ENCODE measurements at regions of chr13 and their contacts with region 1.

Region 1: GRCh38 chr13:106536244-106537034 is 977 bp upstream of the EFNB2 start:
- DNase-seq: peak; percentile 90
- ATAC-seq: peak; percentile 25
- H3K4me3 ChIP-seq: peak overlapping the region; percentile 45 to 83 (median 70)
- H3K4me3 Mint-ChIP-seq: peak overlapping the region; percentile 95
- H3K27ac ChIP-seq: no peak overlapping the region
- H3K27ac Mint-ChIP-seq: peak overlapping the region; percentile 86
- H3K4me1 ChIP-seq: peaks cover 25 to 28% of the 10 kb centered on the region in 2 donors
- H3K4me1 Mint-ChIP-seq: peaks cover 17% of the 10 kb centered on the region
- H3K27me3 ChIP-seq: peaks cover 0 to 31% (median 25%) of the 10 kb centered on the region in 4 experiments
- H3K27me3 Mint-ChIP-seq: peaks cover 26% of the 10 kb centered on the region
- CTCF ChIP-seq: peak; percentile 96

Region 2: DNA sequence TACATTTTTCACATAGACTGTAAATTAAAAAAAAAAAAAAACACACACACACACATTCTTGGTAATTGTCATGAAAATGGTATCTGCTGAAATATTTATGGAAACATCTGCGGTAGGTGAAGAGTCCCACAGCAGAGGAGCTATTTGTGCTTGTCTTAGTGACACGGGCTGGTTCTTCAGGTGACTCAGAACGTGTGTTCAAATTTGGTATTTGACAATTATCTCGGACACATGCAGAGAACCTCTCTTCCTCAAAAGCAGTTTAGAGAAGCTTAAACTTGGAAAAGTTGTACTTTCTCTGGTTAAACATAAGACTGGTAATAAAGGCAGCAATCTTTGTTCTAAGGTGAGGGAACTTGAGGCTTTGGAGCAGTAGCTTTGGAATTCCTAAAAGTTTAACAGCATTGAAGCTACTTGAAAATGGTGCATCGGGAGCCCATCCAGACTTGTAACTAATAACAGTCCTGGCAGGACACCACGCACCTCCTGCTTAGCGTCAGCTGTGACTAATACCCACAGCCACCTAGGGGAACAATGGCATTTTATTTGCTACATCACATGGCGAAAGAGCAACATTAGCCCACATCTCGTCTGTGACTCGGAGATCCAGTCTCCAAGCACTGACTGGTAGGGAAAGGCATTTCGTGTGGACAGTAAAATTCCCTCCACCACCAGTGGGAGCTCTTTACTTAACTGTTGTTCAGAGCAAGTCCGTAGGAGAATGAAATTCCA is 1965.1 kb before region 1 on chr13:
- CTCF ChIA-PET with region 1: no interaction called
- POLR2A ChIA-PET with region 1: no interaction called
- intact Hi-C with region 1: loop called (anchors 5 kb)
- DNase-seq: no peak
- ATAC-seq: no peak
- H3K4me3 ChIP-seq: no peak overlapping the region
- H3K4me3 Mint-ChIP-seq: no peak overlapping the region
- H3K27ac ChIP-seq: no peak overlapping the region
- H3K27ac Mint-ChIP-seq: no peak overlapping the region
- H3K4me1 ChIP-seq: no peaks in the 10 kb centered on the region
- H3K4me1 Mint-ChIP-seq: no peaks in the 10 kb centered on the region
- H3K27me3 ChIP-seq: no peaks in the 10 kb centered on the region
- H3K27me3 Mint-ChIP-seq: no peaks in the 10 kb centered on the region
- CTCF ChIP-seq: no peak

Region 3: GRCh38 chr13:106083620-106084350 is 452.7 kb before region 1 on chr13:
- CTCF ChIA-PET with region 1: no interaction called
- POLR2A ChIA-PET with region 1: no interaction called
- intact Hi-C with region 1: loop called (anchors 10 kb)
- DNase-seq: no peak
- ATAC-seq: no peak
- H3K4me3 ChIP-seq: no peak overlapping the region
- H3K4me3 Mint-ChIP-seq: no peak overlapping the region
- H3K27ac ChIP-seq: no peak overlapping the region
- H3K27ac Mint-ChIP-seq: no peak overlapping the region
- H3K4me1 ChIP-seq: no peaks in the 10 kb centered on the region
- H3K4me1 Mint-ChIP-seq: no peaks in the 10 kb centered on the region
- H3K27me3 ChIP-seq: no peaks in the 10 kb centered on the region
- H3K27me3 Mint-ChIP-seq: no peaks in the 10 kb centered on the region
- CTCF ChIP-seq: no peak

Region 4: GRCh38 chr13:106548064-106548696 is 11.7 kb after region 1 on chr13:
- CTCF ChIA-PET with region 1: interaction called, 14 read pairs
- POLR2A ChIA-PET with region 1: no interaction called
- intact Hi-C with region 1: no loop called
- DNase-seq: no peak
- ATAC-seq: no peak
- H3K4me3 ChIP-seq: no peak overlapping the region
- H3K4me3 Mint-ChIP-seq: no peak overlapping the region
- H3K27ac ChIP-seq: no peak overlapping the region
- H3K27ac Mint-ChIP-seq: no peak overlapping the region
- H3K4me1 ChIP-seq: no peaks in the 10 kb centered on the region
- H3K4me1 Mint-ChIP-seq: peaks cover 11% of the 10 kb centered on the region
- H3K27me3 ChIP-seq: no peaks in the 10 kb centered on the region
- H3K27me3 Mint-ChIP-seq: no peaks in the 10 kb centered on the region
- CTCF ChIP-seq: no peak

Region 5: DNA sequence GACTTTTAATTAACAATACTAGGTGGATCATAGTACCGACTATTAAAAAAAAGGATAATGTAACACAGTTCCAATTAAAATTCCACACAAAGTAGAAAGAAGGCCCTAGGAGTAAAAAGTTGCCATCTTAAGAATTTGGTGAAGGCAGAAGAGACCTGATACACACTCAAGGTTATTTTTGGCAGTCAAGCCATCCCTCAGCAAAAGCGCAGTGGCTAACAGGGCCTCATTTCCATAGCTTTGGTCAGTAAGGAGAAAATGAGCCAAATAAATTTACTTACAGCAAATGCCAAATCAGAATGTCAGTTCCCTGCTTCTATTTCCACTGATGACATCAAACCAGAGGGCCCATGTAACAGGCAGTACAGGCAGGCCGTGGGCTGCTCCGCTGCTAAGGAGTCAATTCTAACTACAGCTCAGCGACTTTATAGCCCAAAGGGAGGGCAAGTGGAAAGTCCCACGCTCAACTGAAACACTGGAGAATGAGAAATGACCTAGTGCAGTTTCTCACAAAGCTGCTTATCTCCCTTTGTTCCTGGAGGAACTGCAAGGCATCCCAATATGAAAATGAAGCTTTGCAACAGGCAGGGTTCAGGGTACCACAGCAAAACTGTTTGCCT is 25.2 kb after region 1 on chr13:
- CTCF ChIA-PET with region 1: interaction called, 56 read pairs
- POLR2A ChIA-PET with region 1: no interaction called
- intact Hi-C with region 1: no loop called
- DNase-seq: peak; percentile 51
- ATAC-seq: peak; percentile 83
- H3K4me3 ChIP-seq: no peak overlapping the region
- H3K4me3 Mint-ChIP-seq: peak overlapping the region; percentile 64
- H3K27ac ChIP-seq: peak overlapping the region in 1 of 2 donors; percentile 54
- H3K27ac Mint-ChIP-seq: no peak overlapping the region
- H3K4me1 ChIP-seq: peaks cover 43 to 56% of the 10 kb centered on the region in 2 donors
- H3K4me1 Mint-ChIP-seq: peaks cover 69% of the 10 kb centered on the region
- H3K27me3 ChIP-seq: no peaks in the 10 kb centered on the region
- H3K27me3 Mint-ChIP-seq: no peaks in the 10 kb centered on the region
- CTCF ChIP-seq: no peak

Region 6: GRCh38 chr13:106567474-106568298 is 31.2 kb after region 1 on chr13 and contains the start of gene ARGLU1:
- CTCF ChIA-PET with region 1: interaction called, 56 read pairs
- POLR2A ChIA-PET with region 1: interaction called, 5 read pairs
- intact Hi-C with region 1: loop called (anchors 1 kb)
- DNase-seq: peak; percentile 96
- ATAC-seq: peak; percentile 84
- H3K4me3 ChIP-seq: peak within 1 kb of the TSS; percentile 82 to 98 (median 96)
- H3K4me3 Mint-ChIP-seq: peak within 1 kb of the TSS; percentile 90
- H3K27ac ChIP-seq: peak within 1 kb of the TSS; percentile 87 to 97
- H3K27ac Mint-ChIP-seq: peak within 1 kb of the TSS; percentile 95
- H3K4me1 ChIP-seq: peaks cover 51 to 52% of the 10 kb centered on the region in 2 donors
- H3K4me1 Mint-ChIP-seq: peaks cover 52% of the 10 kb centered on the region
- H3K27me3 ChIP-seq: no peaks in the 10 kb centered on the region
- H3K27me3 Mint-ChIP-seq: no peaks in the 10 kb centered on the region
- CTCF ChIP-seq: no peak
- total RNA-seq, gene ARGLU1: 245 and 261 TPM in 2 replicates

Region 7: DNA sequence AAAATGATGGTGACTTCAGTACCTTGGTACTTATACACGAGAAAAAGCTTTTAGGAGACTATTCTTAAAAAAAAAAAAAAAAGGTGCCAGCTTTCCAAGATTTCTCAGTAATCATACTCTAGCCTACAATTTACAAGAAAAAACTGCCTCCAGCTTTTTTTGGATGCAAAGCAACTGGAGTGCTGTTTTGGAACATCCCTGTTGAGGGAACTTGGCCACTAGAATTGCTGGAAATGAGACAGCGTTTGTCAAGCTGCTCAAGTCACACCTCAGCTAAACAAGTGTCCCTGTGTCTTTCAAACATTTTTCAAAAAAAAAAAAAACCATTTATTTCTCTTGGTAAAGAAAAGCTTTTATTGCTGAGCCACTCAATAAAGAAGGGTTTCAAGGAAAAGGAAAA is 444.6 kb after region 1 on chr13:
- CTCF ChIA-PET with region 1: no interaction called
- POLR2A ChIA-PET with region 1: no interaction called
- intact Hi-C with region 1: no loop called
- DNase-seq: no peak
- ATAC-seq: no peak
- H3K4me3 ChIP-seq: no peak overlapping the region
- H3K4me3 Mint-ChIP-seq: no peak overlapping the region
- H3K27ac ChIP-seq: no peak overlapping the region
- H3K27ac Mint-ChIP-seq: no peak overlapping the region
- H3K4me1 ChIP-seq: no peaks in the 10 kb centered on the region
- H3K4me1 Mint-ChIP-seq: no peaks in the 10 kb centered on the region
- H3K27me3 ChIP-seq: no peaks in the 10 kb centered on the region
- H3K27me3 Mint-ChIP-seq: no peaks in the 10 kb centered on the region
- CTCF ChIP-seq: no peak

Region 8: GRCh38 chr13:107608736-107609135 is 1072.3 kb after region 1 on chr13:
- CTCF ChIA-PET with region 1: no interaction called
- POLR2A ChIA-PET with region 1: no interaction called
- intact Hi-C with region 1: no loop called
- DNase-seq: no peak
- ATAC-seq: no peak
- H3K4me3 ChIP-seq: no peak overlapping the region
- H3K4me3 Mint-ChIP-seq: no peak overlapping the region
- H3K27ac ChIP-seq: no peak overlapping the region
- H3K27ac Mint-ChIP-seq: no peak overlapping the region
- H3K4me1 ChIP-seq: no peaks in the 10 kb centered on the region
- H3K4me1 Mint-ChIP-seq: no peaks in the 10 kb centered on the region
- H3K27me3 ChIP-seq: no peaks in the 10 kb centered on the region
- H3K27me3 Mint-ChIP-seq: no peaks in the 10 kb centered on the region
- CTCF ChIP-seq: no peak